ENCODE measurements at regions of chr10 and their contacts with region 1.

Region 1: GRCh38 chr10:59181668-59182067 is 5.2 kb downstream of the PHYHIPL start:
- DNase-seq: peak; percentile 41
- H3K4me3 Mint-ChIP-seq: no peak overlapping the region
- H3K27ac Mint-ChIP-seq: no peak overlapping the region
- H3K4me1 Mint-ChIP-seq: peaks cover 10% of the 10 kb centered on the region
- H3K27me3 Mint-ChIP-seq: peaks cover 26% of the 10 kb centered on the region
- CTCF ChIP-seq: peak; percentile 49

Region 2: DNA sequence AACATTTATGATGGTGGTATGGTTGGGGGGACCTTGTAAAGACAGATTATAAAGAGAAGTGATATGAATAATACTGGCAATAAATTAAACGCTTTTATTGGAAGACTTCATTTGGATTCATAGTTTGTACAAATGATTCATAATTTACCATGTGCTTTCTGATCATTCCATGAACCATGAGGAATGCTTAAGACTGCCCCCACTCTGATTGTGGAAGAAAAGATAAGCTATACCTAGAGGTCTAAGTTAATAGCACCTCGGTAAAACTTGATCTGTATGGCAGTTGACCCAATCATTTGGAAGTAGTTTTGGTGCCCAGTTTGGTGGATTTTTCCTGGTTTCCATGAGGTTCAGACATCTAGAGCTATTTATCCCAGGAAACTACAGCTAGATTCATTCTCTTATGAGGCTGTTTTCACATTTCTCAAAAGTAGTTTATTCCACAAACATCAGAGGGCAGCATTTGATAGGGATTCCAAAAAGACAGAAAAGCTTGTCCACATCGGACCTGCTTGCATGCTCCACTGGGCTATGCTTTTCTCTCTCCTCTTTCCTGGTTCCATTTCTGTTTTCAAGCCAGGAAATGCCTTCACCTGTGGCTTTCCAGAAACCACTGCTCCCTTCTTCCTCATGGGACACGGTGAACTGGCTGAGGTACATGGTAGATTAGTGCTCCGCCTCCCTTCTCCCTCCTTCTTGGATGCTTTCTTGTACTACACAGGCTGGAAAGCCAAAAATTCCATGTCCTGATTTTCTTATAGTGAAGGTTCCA is 767.2 kb before region 1 on chr10:
- CTCF ChIA-PET with region 1: no interaction called
- intact Hi-C with region 1: loop called (anchors 1 kb)
- DNase-seq: peak; percentile 63
- H3K4me3 Mint-ChIP-seq: no peak overlapping the region
- H3K27ac Mint-ChIP-seq: no peak overlapping the region
- H3K4me1 Mint-ChIP-seq: peaks cover 32% of the 10 kb centered on the region
- H3K27me3 Mint-ChIP-seq: no peaks in the 10 kb centered on the region
- CTCF ChIP-seq: peak; percentile 71

Region 3: DNA sequence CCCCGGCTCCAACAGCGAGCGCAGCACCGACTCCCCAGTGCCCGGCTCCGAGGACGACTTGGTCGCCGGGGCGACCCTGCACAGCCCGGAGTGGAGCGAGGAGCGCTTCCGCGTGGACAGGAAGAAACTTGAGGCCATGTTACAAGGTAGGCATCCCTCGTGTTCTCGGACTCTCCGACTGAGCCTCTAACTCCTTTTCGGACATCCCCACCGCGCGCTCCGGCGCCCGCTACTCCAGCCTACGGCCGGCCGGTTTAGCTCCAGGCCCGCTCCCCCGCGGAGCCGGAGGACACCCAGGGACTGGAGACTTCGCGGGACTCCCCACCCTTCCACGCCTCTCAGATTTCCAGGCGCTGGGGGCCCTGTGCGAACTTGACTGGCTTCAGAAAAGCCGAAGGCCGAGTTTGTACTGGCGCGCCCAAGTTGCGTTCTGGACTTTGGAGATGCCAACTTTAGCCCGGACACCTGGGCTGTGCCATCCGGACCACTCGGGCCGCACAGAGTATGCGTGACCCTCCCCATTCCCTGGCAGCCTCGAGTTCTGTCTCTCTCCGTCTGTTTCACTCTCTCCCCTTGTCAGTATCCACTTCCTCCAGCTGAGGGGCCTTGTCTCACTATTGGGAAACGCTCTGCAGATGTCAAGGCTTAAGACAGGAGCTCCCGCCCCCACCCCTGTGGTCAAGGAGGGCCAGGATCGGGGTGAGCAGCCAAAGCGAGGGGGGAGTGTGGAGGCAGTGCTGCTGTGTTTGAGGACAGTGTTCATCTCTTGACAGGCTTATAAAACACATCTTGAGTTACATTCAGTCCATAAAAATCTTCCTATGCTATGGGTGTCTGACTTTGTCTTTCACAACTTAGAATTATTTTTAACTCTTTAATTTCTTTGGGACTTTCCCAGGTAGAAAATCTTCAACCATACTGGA is 668.2 kb before region 1 on chr10:
- CTCF ChIA-PET with region 1: no interaction called
- intact Hi-C with region 1: loop called (anchors 10 kb)
- DNase-seq: peak; percentile 82
- H3K4me3 Mint-ChIP-seq: peak overlapping the region; percentile 77
- H3K27ac Mint-ChIP-seq: peak overlapping the region; percentile 76
- H3K4me1 Mint-ChIP-seq: peaks cover 33% of the 10 kb centered on the region
- H3K27me3 Mint-ChIP-seq: no peaks in the 10 kb centered on the region
- CTCF ChIP-seq: no peak

Region 4: DNA sequence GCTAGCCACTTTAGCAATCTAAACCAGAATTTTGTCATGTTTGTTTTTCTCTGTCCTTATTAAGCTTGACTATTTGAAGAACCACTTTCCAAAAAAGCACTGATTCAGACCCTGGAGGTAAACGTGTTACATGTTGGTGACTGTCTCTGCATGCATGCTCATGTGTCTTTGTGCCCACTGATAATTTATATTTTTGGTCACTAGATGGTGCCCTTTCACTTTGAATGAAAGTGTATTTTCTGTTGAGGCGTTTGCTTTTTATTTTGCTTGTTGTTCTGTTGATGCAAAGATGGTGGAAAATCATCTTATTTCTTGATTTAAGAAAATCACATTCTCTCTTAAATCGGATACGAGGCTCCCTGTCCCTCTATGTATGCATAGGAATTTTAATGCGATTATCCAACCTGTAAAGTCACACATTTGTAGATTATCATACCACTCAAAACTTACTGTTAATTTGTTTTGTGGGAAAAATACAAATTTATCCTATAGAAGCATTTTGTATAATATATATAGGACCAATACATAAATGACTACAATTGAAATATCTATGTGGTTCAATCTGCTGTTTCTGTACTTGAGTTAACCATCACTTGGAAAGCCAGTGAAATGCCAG is 399.7 kb before region 1 on chr10:
- CTCF ChIA-PET with region 1: no interaction called
- intact Hi-C with region 1: loop called (anchors 1 kb)
- DNase-seq: peak; percentile 23
- H3K4me3 Mint-ChIP-seq: no peak overlapping the region
- H3K27ac Mint-ChIP-seq: no peak overlapping the region
- H3K4me1 Mint-ChIP-seq: peaks cover 26% of the 10 kb centered on the region
- H3K27me3 Mint-ChIP-seq: no peaks in the 10 kb centered on the region
- CTCF ChIP-seq: peak; percentile 73

Region 5: DNA sequence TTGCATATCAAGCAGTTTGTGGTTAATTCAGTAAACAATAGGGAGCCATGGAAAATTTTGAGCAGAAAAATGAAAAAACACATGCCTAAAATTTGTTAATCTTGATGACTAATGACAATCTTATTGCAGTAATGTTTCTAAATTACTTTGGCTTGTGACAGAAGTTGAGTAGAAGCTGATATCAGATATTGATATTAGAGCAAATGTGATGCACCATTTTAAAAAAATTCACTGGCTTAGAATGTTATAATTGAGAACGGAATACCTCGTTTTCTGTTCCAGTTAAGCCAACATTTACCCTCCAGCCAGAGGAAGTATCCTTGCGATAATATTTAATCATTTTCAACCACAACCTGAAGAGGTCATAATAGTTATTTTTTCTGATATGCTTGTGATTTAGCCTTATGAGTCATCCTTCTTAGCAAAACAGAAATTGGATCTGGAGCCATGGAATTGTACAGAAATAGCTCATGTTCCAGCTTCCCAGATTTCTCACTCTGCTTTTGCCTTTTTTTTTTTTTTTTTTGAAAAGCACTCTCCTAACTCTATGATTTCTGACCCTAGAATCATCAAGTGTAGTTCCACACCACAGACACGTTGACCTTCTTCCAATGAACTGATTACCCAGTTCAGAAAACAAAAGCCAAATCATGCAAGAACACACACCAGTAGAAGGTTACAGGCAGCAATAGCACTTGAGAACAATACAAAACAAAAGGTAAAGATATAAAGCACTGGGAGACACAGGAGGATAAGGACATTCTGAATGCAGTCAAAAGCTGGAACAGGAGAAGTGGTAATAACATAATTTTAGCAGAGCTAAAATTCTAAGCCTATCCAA is 102.1 kb before region 1 on chr10:
- CTCF ChIA-PET with region 1: no interaction called
- intact Hi-C with region 1: loop called (anchors 5 kb)
- DNase-seq: no peak
- H3K4me3 Mint-ChIP-seq: no peak overlapping the region
- H3K27ac Mint-ChIP-seq: no peak overlapping the region
- H3K4me1 Mint-ChIP-seq: peaks cover 26% of the 10 kb centered on the region
- H3K27me3 Mint-ChIP-seq: peaks cover 43% of the 10 kb centered on the region
- CTCF ChIP-seq: no peak

Region 6: GRCh38 chr10:59346321-59346720 is 164.7 kb after region 1 on chr10:
- CTCF ChIA-PET with region 1: no interaction called
- intact Hi-C with region 1: no loop called
- DNase-seq: no peak
- H3K4me3 Mint-ChIP-seq: no peak overlapping the region
- H3K27ac Mint-ChIP-seq: no peak overlapping the region
- H3K4me1 Mint-ChIP-seq: no peaks in the 10 kb centered on the region
- H3K27me3 Mint-ChIP-seq: peaks cover 66% of the 10 kb centered on the region
- CTCF ChIP-seq: no peak

Measured in Calu3 (cell line).